IMR-90 (cell line): ENCODE measurements at regions of chr4 and their contacts with region 1.

Region 1: DNA sequence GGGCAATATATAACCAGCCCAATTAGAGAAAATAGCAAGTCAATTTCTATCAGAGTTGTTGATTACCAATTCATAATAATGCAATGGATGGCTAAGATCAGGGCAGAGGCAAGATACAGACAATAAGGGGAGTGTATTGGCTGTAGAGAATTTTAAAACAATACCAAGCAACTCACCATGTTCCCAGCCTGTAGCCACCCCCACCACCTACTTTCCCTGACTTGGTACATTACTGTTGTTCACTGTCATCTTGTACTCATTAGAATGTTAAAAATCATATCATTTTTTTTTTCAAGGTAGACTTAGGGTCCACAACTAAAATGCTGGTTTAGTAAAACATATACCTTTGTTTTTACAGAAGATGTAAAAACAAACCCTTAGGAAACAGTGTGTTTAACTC is 27.7 kb downstream of the HNRNPD start:
- DNase-seq: no peak
- ATAC-seq: no peak
- H3K4me3 ChIP-seq: no peak overlapping the region
- H3K27ac ChIP-seq: no peak overlapping the region
- H3K4me1 ChIP-seq: no peaks in the 10 kb centered on the region
- H3K27me3 ChIP-seq: no peaks in the 10 kb centered on the region
- CTCF ChIP-seq: no peak
- POLR2A ChIP-seq: no peak
- RAD21 ChIP-seq: no peak

Region 2: DNA sequence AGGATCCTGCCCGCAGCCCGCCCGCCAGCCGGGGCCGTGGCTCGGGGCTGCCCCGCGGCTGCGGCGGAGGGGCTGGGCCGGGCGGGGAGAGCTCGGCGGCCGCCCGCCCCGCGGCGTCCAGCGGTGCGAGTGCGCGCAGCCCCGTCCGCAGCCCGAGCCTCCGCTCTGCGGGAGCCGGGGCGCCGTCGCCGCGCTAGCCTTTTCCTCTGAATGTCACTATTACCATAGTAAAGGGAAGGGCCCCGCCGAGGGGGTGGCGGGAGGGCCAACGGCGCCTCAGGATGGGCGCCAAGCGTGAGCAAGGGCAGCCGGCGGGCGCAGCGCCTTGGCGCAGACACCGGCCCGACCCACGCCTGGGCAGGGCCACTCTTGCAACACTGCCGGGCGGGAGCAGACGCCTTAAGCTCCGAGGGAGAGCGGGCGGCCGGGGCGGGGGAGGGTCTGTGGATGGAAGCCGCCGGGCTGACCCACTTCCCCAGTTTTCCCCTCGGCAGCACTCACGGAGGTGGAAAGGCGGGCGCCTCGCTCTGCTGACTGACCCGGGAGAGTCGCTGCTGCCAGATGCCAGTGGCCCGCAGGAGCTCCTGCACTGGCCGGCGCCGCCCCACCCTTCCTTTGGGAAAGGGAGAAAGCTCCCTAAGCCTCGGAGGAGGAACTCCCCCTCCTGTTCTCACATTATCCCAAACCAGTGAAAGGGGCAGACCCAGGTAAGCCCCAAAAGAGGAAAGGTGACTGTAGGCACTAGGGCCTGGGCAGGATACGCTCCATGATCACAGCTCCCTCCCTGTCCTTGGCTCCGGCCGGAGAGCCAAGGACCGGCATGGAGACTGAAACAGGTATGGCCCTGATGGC is 301.8 kb before region 1 on chr4:
- CTCF ChIA-PET with region 1: no interaction called
- POLR2A ChIA-PET with region 1: no interaction called
- dilution Hi-C with region 1: no loop called
- in situ Hi-C with region 1: no loop called
- intact Hi-C with region 1: no loop called
- DNase-seq: peak; percentile 0
- ATAC-seq: peak; percentile 88
- H3K4me3 ChIP-seq: peak overlapping the region; percentile 28; the same call in 1 of the 2 replicates
- H3K27ac ChIP-seq: no peak overlapping the region
- H3K4me1 ChIP-seq: no peaks in the 10 kb centered on the region
- H3K27me3 ChIP-seq: peaks cover 25% of the 10 kb centered on the region
- CTCF ChIP-seq: no peak
- POLR2A ChIP-seq: no peak
- RAD21 ChIP-seq: no peak

Region 3: GRCh38 chr4:82284858-82285805 is 61.0 kb before region 1 on chr4:
- CTCF ChIA-PET with region 1: interaction called, 3 read pairs
- POLR2A ChIA-PET with region 1: interaction called, 15 read pairs
- dilution Hi-C with region 1: no loop called
- in situ Hi-C with region 1: no loop called
- intact Hi-C with region 1: no loop called
- DNase-seq: peak; percentile 99
- ATAC-seq: peak; percentile 100
- H3K4me3 ChIP-seq: peak overlapping the region; percentile 50
- H3K27ac ChIP-seq: no peak overlapping the region
- H3K4me1 ChIP-seq: no peaks in the 10 kb centered on the region
- H3K27me3 ChIP-seq: peaks cover 2% of the 10 kb centered on the region; the same call in 1 of the 2 replicates
- CTCF ChIP-seq: peak; percentile 70
- POLR2A ChIP-seq: no peak
- RAD21 ChIP-seq: 0 out of 2 replicates have a peak, but pooled peaks have one; percentile 21